MCF 10A (cell line): ENCODE measurements at regions of chr14 and their contacts with region 1.

Region 1: DNA sequence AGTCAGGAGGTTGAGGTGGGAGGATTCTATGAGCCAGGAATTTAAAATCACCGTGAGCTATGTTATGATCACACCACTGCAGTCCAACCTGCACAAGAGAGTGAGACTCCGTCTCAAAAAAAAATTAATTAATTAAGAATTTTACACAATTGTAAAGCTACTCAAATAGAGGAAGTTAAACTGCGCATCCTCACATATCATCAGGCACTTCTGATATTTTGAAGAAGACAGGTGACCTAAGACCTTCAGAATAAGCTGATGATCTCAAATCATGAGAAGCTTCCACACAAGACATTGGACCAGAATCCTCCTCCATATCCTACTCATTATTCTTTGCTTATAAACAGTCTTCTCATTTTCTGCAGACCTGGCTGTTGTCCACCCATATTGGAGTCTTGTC is 800.9 kb downstream of the TMEM121 start:
- DNase-seq: no peak
- H3K4me3 Mint-ChIP-seq: no peak overlapping the region
- H3K27ac Mint-ChIP-seq: no peak overlapping the region
- H3K4me1 Mint-ChIP-seq: no peaks in the 10 kb centered on the region
- H3K27me3 Mint-ChIP-seq: peaks cover 76% of the 10 kb centered on the region
- CTCF ChIP-seq: no peak

Region 2: DNA sequence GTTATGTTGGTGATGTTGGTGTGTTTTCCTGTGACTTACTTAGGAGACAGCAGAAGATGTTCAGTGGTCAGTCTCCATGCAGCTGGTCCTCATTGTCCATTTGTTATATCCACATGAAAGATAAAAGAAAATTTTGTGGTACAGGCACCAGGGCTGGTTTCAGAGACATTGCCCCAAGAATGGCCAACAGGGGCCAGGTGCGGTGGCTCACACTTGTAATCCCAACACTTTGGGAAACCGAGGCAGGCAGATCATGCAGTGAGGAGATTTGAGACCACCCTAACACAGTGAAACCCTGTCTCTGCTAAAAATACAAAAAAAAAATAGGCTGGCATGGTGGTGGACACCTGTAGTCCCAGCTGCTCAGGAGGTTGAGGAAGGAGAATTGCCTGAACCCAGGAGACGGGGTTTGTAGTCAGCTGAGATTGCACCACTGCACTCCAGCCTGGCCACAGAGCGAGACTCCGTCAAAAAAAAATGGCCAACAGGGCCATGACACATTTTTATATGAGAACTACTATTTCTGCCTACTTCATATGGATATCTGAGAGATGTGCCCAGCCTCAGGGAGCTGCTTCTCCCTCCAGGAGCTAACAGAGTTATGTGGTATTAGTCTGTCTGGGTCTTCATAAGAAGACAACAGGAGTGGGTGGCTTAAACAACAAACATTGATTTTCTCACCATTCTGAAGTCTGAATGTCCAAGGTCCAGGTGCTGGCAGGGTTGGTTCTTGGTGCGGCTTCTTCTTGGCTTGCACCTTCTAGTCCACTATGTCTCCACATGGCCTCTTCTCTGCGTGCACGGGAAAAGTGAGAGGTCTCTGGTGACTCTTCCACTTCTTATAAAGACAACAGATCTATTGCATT is 20.9 kb after region 1 on chr14:
- CTCF ChIA-PET with region 1: no interaction called
- POLR2A ChIA-PET with region 1: no interaction called
- intact Hi-C with region 1: loop called (anchors 2 kb)
- DNase-seq: no peak
- H3K4me3 Mint-ChIP-seq: no peak overlapping the region
- H3K27ac Mint-ChIP-seq: no peak overlapping the region
- H3K4me1 Mint-ChIP-seq: no peaks in the 10 kb centered on the region
- H3K27me3 Mint-ChIP-seq: peaks cover 79% of the 10 kb centered on the region
- CTCF ChIP-seq: no peak

Region 3: GRCh38 chr14:106556665-106557289 is 229.5 kb after region 1 on chr14:
- CTCF ChIA-PET with region 1: no interaction called
- POLR2A ChIA-PET with region 1: no interaction called
- intact Hi-C with region 1: no loop called
- DNase-seq: peak; percentile 68
- H3K4me3 Mint-ChIP-seq: no peak overlapping the region
- H3K27ac Mint-ChIP-seq: no peak overlapping the region
- H3K4me1 Mint-ChIP-seq: no peaks in the 10 kb centered on the region
- H3K27me3 Mint-ChIP-seq: peaks cover 51% of the 10 kb centered on the region
- CTCF ChIP-seq: peak; percentile 86